ENCODE measurements at regions of chr20 and their contacts with region 1.

Region 1: GRCh38 chr20:19661717-19662636 is 96.1 kb upstream of the RIN2 start:
- DNase-seq: peak; percentile 71
- ATAC-seq: peak; percentile 97
- H3K4me3 ChIP-seq: no peak overlapping the region
- H3K27ac ChIP-seq: no peak overlapping the region
- H3K4me1 ChIP-seq: no peaks in the 10 kb centered on the region
- H3K27me3 ChIP-seq: peaks cover 41% of the 10 kb centered on the region
- CTCF ChIP-seq: peak; percentile 97
- POLR2A ChIP-seq: no peak
- RAD21 ChIP-seq: peak; percentile 97

Region 2: DNA sequence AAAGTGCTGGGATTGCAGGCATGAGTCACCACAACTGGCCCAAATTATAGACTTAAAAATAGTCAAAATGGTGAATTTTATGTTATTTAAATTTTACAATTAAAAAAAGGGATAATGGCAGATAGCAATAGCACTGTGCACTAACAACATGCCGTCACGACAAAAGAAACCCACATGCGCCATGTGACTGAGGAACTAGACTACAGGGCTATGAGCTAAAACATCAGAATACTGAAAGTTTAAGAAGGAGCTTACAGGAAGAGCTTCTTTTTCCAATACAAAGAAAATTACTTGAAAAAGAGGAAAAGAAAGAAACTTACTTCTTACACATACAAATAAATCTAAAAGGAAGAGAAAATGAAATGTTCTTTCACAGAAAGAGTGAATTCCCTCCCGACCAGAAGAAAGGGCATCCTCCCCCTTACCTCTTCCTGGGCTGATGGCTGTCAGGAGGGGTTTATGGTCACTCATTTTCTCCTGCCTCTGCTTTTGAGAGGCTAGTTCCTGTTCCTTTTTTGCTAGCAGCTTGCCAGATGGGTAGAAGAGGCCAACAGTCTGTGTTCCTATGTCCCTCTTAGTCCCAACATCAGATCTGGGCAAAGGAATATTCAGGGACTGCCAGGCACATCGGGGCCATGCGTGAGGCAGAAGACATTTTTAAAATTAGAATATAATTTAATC is 1249.6 kb before region 1 on chr20:
- CTCF ChIA-PET with region 1: no interaction called
- POLR2A ChIA-PET with region 1: no interaction called
- dilution Hi-C with region 1: no loop called
- in situ Hi-C with region 1: no loop called
- intact Hi-C with region 1: loop called (anchors 1 kb)
- DNase-seq: no peak
- ATAC-seq: no peak
- H3K4me3 ChIP-seq: no peak overlapping the region
- H3K27ac ChIP-seq: no peak overlapping the region
- H3K4me1 ChIP-seq: no peaks in the 10 kb centered on the region
- H3K27me3 ChIP-seq: no peaks in the 10 kb centered on the region
- CTCF ChIP-seq: no peak
- POLR2A ChIP-seq: no peak
- RAD21 ChIP-seq: no peak

Region 3: DNA sequence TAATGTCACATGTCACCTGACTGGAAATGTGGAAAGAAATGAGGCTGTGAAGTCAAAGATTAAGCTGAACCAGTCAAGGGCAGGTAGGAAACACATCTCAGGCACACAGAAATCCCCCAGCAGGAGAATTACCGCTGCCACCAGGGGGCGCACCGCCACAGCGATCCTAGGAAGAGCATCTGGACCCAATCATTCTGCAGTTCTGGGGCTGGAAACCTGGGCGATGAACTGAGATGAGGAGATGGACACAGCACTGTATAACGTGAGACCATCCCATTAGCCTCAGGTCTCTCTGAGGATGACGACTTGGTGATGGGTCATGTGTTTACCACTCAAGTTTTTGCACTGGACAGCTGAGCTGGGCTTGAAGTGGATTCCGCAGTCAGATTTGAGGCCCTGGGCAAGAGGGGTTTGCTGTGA is 456.0 kb before region 1 on chr20:
- CTCF ChIA-PET with region 1: no interaction called
- POLR2A ChIA-PET with region 1: no interaction called
- dilution Hi-C with region 1: no loop called
- in situ Hi-C with region 1: loop called (anchors 5 kb)
- intact Hi-C with region 1: no loop called
- DNase-seq: peak; percentile 10
- ATAC-seq: peak; percentile 42
- H3K4me3 ChIP-seq: no peak overlapping the region
- H3K27ac ChIP-seq: no peak overlapping the region
- H3K4me1 ChIP-seq: no peaks in the 10 kb centered on the region
- H3K27me3 ChIP-seq: peaks cover 4% of the 10 kb centered on the region; the same call in 1 of the 2 replicates
- CTCF ChIP-seq: peak; percentile 69
- POLR2A ChIP-seq: no peak
- RAD21 ChIP-seq: peak; percentile 57

Region 4: GRCh38 chr20:19628570-19629169 is 33.3 kb before region 1 on chr20:
- CTCF ChIA-PET with region 1: interaction called, 13 read pairs
- POLR2A ChIA-PET with region 1: no interaction called
- dilution Hi-C with region 1: no loop called
- in situ Hi-C with region 1: no loop called
- intact Hi-C with region 1: loop called (anchors 1 kb)
- DNase-seq: peak; percentile 66
- ATAC-seq: peak; percentile 56; the same call in 1 of the 2 replicates
- H3K4me3 ChIP-seq: no peak overlapping the region
- H3K27ac ChIP-seq: no peak overlapping the region
- H3K4me1 ChIP-seq: no peaks in the 10 kb centered on the region
- H3K27me3 ChIP-seq: peaks cover 6% of the 10 kb centered on the region
- CTCF ChIP-seq: peak; percentile 65
- POLR2A ChIP-seq: no peak
- RAD21 ChIP-seq: peak; percentile 50

Region 5: GRCh38 chr20:19807191-19807945 is 145.4 kb after region 1 on chr20:
- CTCF ChIA-PET with region 1: no interaction called
- POLR2A ChIA-PET with region 1: no interaction called
- dilution Hi-C with region 1: no loop called
- in situ Hi-C with region 1: no loop called
- intact Hi-C with region 1: no loop called
- DNase-seq: peak; percentile 35
- ATAC-seq: no peak
- H3K4me3 ChIP-seq: no peak overlapping the region
- H3K27ac ChIP-seq: peak overlapping the region; percentile 56; the same call in 1 of the 2 replicates
- H3K4me1 ChIP-seq: peaks cover 20% of the 10 kb centered on the region
- H3K27me3 ChIP-seq: no peaks in the 10 kb centered on the region
- CTCF ChIP-seq: no peak
- POLR2A ChIP-seq: no peak
- RAD21 ChIP-seq: no peak

Region 6: DNA sequence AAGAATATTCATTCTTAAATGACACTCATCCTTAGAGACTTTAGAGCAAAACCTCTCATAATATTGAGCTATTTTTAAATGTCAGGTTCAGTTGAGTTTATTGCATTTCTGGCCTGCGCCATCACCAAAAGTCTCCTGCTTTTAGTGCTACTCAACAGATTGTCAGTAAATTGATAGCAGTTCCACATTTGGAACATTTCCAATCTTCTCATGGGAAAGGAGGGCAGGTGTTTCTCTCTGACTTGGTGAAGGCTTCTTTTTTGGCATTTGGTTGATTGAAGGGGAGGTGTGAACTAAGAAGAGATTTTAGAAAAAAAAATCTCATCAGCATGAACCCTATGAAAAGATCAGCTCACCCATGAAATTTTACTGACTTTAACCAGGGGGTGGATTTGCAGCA is 580.0 kb after region 1 on chr20:
- CTCF ChIA-PET with region 1: no interaction called
- POLR2A ChIA-PET with region 1: no interaction called
- dilution Hi-C with region 1: no loop called
- in situ Hi-C with region 1: no loop called
- intact Hi-C with region 1: no loop called
- DNase-seq: no peak
- ATAC-seq: no peak
- H3K4me3 ChIP-seq: no peak overlapping the region
- H3K27ac ChIP-seq: no peak overlapping the region
- H3K4me1 ChIP-seq: no peaks in the 10 kb centered on the region
- H3K27me3 ChIP-seq: no peaks in the 10 kb centered on the region; the same call in 1 of the 2 replicates
- CTCF ChIP-seq: no peak
- POLR2A ChIP-seq: no peak
- RAD21 ChIP-seq: no peak